ENCODE measurements at regions of chr3 and their contacts with region 1.

Region 1: DNA sequence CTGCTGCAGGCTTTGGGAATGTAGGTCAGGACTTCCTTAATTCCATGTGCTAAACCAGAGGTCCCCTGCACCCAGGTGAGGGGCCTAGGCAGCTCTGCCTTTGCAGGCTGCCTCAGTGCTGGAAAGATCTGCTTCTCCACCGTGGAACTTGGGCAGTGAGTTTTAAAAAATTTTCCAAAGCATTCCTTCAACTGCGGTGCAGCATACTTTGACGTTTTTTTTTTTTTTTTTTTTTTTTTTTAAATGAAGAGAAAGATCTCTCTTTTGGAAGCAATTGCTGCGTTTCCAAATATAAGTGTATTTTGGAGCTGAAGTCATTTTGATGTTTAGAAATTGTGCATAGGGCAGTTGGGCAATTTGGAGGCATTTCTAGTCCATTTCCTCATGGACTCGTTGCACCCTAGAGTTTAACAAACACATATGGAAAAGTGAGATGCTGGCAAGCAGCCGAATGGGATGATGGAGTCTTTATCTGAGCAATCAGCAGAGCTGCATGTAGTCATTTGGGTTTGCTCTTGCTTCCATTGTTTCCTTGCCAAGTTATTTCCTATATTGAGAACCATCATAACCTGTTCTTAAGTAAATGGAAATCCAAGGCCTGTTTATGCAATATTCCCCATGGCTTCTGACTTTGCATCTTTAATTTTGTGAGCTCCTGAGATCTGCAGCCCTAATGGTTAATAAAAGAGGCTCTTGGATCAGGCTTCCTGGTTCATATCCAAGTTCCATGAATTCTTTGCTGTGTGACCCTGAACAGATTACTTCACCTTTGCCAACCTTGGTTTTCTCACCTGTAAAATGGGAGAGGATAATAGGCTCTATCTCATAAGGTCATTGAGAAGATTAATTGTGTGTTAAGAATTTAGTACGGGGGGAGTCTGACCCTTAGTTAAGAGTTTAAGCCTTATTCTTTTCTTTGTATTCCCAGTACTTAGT is 31.2 kb downstream of the ITPR1 start:
- DNase-seq: peak; percentile 50
- H3K4me3 ChIP-seq: peak overlapping the region in 1 of 2 experiments; percentile 4; a peak in 1 of 4 replicates
- H3K27ac ChIP-seq: peak overlapping the region; percentile 62 to 97
- H3K4me1 ChIP-seq: peaks cover 6 to 42% of the 10 kb centered on the region in 2 experiments; a peak in 2 of 4 replicates
- H3K27me3 ChIP-seq: no peaks in the 10 kb centered on the region
- CTCF ChIP-seq: no peak
- EP300 ChIP-seq: peak; percentile 84 to 97; a peak in 3 of 4 replicates
- RAD21 ChIP-seq: peak; percentile 43; the same call in 1 of the 2 replicates

Region 2: DNA sequence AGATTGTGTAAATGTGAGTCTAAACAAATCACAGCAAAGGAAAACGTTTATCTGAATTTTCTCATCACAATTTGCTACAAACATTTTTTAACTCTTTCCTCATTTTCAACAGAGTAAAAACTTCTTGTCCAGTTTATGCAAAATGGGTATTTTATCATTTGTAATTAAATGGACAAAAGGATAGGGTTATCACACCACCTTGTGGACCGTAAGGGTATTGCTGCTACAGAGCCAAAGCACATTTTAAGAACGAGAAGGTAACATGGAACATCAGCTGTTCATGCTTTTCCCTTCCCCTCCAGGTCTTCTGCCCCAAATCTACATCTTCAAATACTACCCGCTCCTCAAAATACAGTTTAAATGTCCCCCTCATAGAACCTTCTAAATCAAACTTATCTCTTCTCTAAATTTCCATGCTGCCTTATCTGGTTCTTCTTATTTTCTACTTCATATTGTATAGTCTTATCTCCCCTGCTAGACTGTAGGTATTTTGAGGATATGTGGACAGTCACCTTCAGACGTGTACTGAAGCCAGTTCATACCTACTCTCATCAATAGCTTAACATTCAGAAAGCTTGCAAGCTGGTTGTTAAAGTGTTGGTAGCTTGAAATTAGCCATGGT is 234.0 kb before region 1 on chr3:
- CTCF ChIA-PET with region 1: no interaction called
- POLR2A ChIA-PET with region 1: no interaction called
- DNase-seq: peak; percentile 32
- H3K4me3 ChIP-seq: peak overlapping the region in 1 of 2 experiments; percentile 42; a peak in 1 of 4 replicates
- H3K27ac ChIP-seq: no peak overlapping the region
- H3K4me1 ChIP-seq: no peaks in the 10 kb centered on the region; a peak in 1 of 4 replicates
- H3K27me3 ChIP-seq: no peaks in the 10 kb centered on the region; the same call in 1 of the 2 replicates
- CTCF ChIP-seq: peak; percentile 91
- EP300 ChIP-seq: no peak
- RAD21 ChIP-seq: peak; percentile 86

Region 3: DNA sequence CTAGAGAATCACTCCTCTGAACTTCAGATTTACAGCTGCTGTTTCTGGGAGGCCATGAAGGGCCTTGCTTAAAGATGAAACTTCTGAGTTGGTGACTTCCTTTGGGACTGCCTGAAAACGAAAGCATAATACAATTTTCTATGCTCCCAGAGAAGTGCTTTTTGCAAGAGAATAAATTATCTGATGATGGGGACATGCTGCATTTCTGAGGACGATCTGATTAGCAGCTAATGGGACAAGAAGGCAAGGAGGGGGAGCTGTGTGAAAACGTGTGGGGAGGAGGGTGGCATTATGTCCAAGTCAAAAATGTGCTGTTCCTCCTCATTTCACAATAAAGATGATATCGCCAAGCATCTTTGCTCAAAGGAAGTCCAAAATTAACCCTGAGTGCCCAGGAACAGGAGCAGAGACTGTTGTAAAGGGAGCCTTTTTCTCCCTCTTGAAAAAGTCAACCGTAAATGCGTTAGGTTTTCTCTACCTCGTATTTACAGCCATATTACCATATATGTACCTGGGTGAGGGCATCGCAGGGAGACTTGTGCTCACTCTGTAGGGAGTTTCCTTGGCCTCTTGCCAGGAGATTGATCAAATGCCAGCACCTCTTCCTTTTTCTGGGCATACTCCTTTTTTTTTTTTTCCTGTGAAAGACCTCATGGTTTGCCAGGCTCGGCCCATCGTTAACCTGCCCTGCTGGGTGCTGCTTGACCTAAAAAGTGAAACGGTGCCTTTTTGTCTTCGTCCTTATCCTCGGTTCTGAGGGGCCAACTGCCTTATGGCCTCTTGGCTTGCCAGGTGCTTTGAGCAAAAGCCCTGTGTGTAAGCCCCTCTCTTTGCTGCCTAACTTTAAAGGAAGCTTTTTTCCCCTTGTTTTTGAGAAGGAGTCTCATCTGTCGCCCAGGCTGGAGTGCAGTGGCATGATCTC is 19.8 kb before region 1 on chr3:
- CTCF ChIA-PET with region 1: interaction called, 12 read pairs
- POLR2A ChIA-PET with region 1: no interaction called
- DNase-seq: peak; percentile 61
- H3K4me3 ChIP-seq: peak overlapping the region; percentile 15 to 55; a peak in 3 of 4 replicates
- H3K27ac ChIP-seq: peak overlapping the region; percentile 39 to 89; a peak in 3 of 4 replicates
- H3K4me1 ChIP-seq: peaks cover 9 to 54% of the 10 kb centered on the region in 2 experiments; a peak in 2 of 4 replicates
- H3K27me3 ChIP-seq: no peaks in the 10 kb centered on the region
- CTCF ChIP-seq: no peak
- EP300 ChIP-seq: peak in 1 of 2 experiments; percentile 84; a peak in 2 of 4 replicates
- RAD21 ChIP-seq: peak; percentile 18

Region 4: GRCh38 chr3:4512895-4513616 is 11.3 kb before region 1 on chr3:
- CTCF ChIA-PET with region 1: interaction called, 11 read pairs
- POLR2A ChIA-PET with region 1: interaction called, 11 read pairs
- DNase-seq: peak; percentile 51
- H3K4me3 ChIP-seq: no peak overlapping the region
- H3K27ac ChIP-seq: peak overlapping the region in 1 of 2 experiments; percentile 89; a peak in 2 of 4 replicates
- H3K4me1 ChIP-seq: peaks cover 0 to 45% of the 10 kb centered on the region in 2 experiments; a peak in 2 of 4 replicates
- H3K27me3 ChIP-seq: no peaks in the 10 kb centered on the region
- CTCF ChIP-seq: no peak
- EP300 ChIP-seq: no peak
- RAD21 ChIP-seq: no peak